ENCODE measurements at regions of chr11 and their contacts with region 1.

Region 1: DNA sequence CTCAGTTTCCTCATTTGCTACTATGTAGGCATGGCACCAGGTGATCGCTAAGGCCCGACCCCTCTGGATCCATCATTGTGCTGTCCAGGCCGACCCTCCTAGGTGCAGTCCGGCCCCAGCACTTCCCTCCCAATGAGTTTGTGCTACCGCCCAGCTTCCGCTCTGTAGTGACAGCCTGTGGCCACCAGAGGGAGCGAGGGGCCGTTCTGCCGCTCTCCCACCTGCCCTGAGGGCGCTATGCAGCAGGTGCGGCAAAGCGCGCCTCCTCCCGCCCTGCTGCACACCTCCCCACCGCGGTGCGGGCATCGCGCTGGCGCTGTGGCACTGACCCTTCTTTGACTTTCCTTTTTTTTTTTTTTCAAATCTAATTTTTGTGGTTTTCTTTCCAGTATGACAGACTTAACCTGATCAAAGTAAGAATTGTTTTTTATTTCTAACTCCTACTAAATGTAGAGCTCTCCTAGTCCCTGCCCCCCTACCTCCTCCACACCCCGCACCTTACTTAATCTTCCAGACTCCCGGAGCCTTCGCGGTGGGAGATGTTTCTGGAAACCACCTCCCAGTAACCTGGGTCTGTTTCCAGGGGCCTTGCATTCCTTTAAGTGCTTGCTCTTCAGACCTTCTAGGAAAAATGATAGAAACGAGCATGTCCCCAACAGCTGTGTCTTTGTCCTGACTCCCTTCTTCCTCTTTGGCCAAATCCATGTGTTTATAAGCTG is 73.7 kb downstream of the SCN3B start:
- DNase-seq: peak in 4 of 5 donors; percentile 79 to 81 (median 80)
- H3K4me3 ChIP-seq: no peak overlapping the region
- H3K27ac ChIP-seq: no peak overlapping the region
- H3K4me1 ChIP-seq: no peaks in the 10 kb centered on the region
- H3K27me3 ChIP-seq: no peaks in the 10 kb centered on the region
- CTCF ChIP-seq: peak; percentile 98

Region 2: DNA sequence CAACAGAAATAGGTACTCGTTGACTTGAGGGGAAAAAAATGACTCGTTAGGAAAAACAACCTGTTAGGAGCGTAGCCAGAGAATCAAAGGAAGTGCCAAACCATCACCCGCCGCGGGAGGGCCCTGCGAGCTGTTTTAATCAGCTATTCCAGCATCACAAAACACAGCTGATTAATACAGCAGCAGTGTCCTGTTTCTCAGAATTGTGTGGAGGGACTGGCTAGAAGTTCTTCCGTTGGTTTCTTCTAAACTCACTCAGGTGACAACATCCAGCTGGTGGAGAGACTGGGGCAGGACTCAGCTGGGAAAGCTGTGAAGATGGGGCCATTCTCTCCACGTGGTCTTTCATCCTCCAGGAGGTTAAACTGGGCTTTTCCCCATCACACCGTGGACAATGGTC is 546.8 kb before region 1 on chr11:
- intact Hi-C with region 1: no loop called
- DNase-seq: peak in 3 of 5 donors; percentile 15 to 46 (median 26)
- H3K4me3 ChIP-seq: no peak overlapping the region
- H3K27ac ChIP-seq: no peak overlapping the region
- H3K4me1 ChIP-seq: no peaks in the 10 kb centered on the region
- H3K27me3 ChIP-seq: no peaks in the 10 kb centered on the region
- CTCF ChIP-seq: no peak

Region 3: GRCh38 chr11:123371506-123372297 is 209.0 kb before region 1 on chr11:
- intact Hi-C with region 1: no loop called
- DNase-seq: no peak
- H3K4me3 ChIP-seq: no peak overlapping the region
- H3K27ac ChIP-seq: no peak overlapping the region
- H3K4me1 ChIP-seq: no peaks in the 10 kb centered on the region
- H3K27me3 ChIP-seq: no peaks in the 10 kb centered on the region
- CTCF ChIP-seq: no peak

Region 4: GRCh38 chr11:123511037-123511870 is 69.5 kb before region 1 on chr11:
- intact Hi-C with region 1: loop called (anchors 5 kb)
- DNase-seq: peak; percentile 90 to 95 (median 94)
- H3K4me3 ChIP-seq: no peak overlapping the region
- H3K27ac ChIP-seq: no peak overlapping the region
- H3K4me1 ChIP-seq: no peaks in the 10 kb centered on the region
- H3K27me3 ChIP-seq: no peaks in the 10 kb centered on the region
- CTCF ChIP-seq: peak; percentile 80

Region 5: DNA sequence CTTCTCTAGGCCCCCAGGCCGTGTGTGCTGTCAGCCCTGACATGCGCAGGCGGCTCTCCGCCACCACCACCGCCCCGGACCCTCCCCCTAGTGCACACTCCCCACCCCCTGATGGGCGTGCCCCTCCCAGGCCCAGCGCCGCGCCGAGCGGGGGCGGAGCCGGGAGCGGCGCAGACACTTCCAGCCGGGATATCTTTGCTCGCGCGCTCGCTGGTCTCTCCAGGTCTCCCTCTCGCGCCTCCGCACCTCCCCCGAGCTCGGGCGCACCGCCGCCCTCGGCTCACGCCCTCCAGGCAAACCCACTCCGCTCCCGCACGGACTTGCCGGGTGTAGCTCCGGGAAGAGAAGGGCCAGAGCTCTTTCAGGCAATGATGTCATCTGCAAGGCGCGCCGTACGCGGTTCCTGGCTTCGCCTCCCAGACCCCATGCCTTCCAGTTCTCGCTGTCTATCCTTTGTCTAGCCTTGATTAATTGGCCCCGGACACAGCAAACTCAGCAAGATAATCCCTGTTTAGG is 73.9 kb after region 1 on chr11 and contains the start of gene SCN3B:
- intact Hi-C with region 1: no loop called
- DNase-seq: peak; percentile 88 to 93 (median 92)
- H3K4me3 ChIP-seq: peak within 1 kb of the TSS; percentile 51 to 76 (median 69)
- H3K27ac ChIP-seq: peak within 1 kb of the TSS; percentile 68 to 83
- H3K4me1 ChIP-seq: peaks cover 0 to 6% (median 0%) of the 10 kb centered on the region in 3 donors
- H3K27me3 ChIP-seq: peaks cover 13% of the 10 kb centered on the region
- CTCF ChIP-seq: no peak
- total RNA-seq, gene SCN3B: 2.8 TPM

Region 6: GRCh38 chr11:123956752-123957151 is 376.0 kb after region 1 on chr11:
- intact Hi-C with region 1: no loop called
- DNase-seq: no peak
- H3K4me3 ChIP-seq: no peak overlapping the region
- H3K27ac ChIP-seq: no peak overlapping the region
- H3K4me1 ChIP-seq: no peaks in the 10 kb centered on the region
- H3K27me3 ChIP-seq: no peaks in the 10 kb centered on the region
- CTCF ChIP-seq: no peak